ENCODE measurements at regions of chr20 and their contacts with region 1.

Region 1: DNA sequence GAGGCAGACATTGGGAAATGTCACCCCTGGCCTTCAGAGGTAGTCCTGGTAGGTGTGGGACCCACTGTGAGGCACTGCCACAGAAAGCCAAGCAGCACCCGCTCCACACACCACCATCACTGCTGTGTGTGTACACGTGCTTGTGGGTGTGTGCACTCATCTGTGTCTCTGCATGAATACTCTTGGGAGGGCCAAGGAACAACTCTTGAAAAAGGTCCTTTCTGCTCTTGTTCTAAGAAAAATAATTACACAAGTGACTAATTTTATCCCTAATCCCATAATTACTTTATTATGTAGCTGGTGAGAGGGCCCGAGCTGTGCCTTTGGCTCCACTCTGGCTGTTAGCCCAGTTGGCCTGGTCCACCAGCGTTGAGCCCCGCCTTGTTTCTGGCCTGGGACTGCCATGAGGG is 21.7 kb upstream of the EPB41L1 start:
- DNase-seq: no peak
- H3K4me3 Mint-ChIP-seq: no peak overlapping the region
- H3K27ac Mint-ChIP-seq: no peak overlapping the region
- H3K4me1 Mint-ChIP-seq: no peaks in the 10 kb centered on the region
- H3K27me3 Mint-ChIP-seq: peaks cover 1% of the 10 kb centered on the region

Region 2: GRCh38 chr20:36010825-36011224 is 122.0 kb before region 1 on chr20:
- CTCF ChIA-PET with region 1: interaction called, 10 read pairs
- POLR2A ChIA-PET with region 1: no interaction called
- DNase-seq: no peak
- H3K4me3 Mint-ChIP-seq: no peak overlapping the region
- H3K27ac Mint-ChIP-seq: no peak overlapping the region
- H3K4me1 Mint-ChIP-seq: no peaks in the 10 kb centered on the region
- H3K27me3 Mint-ChIP-seq: no peaks in the 10 kb centered on the region